ENCODE measurements at regions of chr3 and their contacts with region 1.

Region 1: DNA sequence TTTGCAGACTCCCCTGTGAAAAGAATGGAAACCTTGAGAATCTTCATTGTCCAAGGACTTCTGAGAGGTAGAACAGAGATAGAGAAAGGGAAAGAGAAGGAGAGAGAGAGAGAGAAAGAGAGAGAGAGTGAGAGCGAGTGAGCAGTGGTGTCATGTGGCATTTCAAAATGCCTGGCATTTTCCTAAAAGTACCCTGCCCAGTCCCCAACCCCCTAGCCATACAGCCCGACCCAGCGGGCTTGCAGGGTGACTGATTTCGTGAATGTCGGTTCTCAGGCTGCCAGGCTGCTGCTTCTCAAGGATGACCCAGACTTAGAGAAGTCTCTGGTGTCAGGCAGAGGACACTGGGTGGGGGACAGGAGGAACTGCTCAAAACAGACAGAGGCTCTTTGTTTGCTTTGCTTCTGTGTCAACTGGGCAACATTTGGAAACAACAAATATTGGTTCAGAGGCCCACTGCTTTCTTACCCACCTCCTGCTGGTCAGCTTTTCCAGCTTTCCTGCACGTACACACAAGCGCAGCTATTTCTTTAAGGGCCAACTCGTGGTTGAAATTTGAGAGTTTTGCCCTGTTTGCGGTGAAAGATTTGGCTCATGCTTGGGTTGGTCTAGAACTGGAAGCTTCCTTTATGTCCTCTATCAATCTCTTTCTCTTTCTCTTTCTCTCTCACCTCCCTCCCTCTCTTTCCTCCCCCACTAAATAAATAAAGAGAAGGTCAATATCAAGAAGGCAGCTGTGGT is 3.7 kb upstream of the TF start:
- DNase-seq: peak; percentile 97
- ATAC-seq: peak; percentile 78
- H3K4me3 ChIP-seq: peak overlapping the region; percentile 29 to 65 (median 48); a peak in 5 of 6 replicates
- H3K27ac ChIP-seq: peak overlapping the region; percentile 90
- H3K4me1 ChIP-seq: peaks cover 55% of the 10 kb centered on the region
- H3K27me3 ChIP-seq: peaks cover 0 to 3% of the 10 kb centered on the region in 2 experiments; a peak in 1 of 5 replicates
- CTCF ChIP-seq: peak; percentile 30
- EP300 ChIP-seq: peak; percentile 87 to 100; a peak in 3 of 4 replicates
- POLR2A ChIP-seq: no peak
- RAD21 ChIP-seq: peak; percentile 80

Region 2: DNA sequence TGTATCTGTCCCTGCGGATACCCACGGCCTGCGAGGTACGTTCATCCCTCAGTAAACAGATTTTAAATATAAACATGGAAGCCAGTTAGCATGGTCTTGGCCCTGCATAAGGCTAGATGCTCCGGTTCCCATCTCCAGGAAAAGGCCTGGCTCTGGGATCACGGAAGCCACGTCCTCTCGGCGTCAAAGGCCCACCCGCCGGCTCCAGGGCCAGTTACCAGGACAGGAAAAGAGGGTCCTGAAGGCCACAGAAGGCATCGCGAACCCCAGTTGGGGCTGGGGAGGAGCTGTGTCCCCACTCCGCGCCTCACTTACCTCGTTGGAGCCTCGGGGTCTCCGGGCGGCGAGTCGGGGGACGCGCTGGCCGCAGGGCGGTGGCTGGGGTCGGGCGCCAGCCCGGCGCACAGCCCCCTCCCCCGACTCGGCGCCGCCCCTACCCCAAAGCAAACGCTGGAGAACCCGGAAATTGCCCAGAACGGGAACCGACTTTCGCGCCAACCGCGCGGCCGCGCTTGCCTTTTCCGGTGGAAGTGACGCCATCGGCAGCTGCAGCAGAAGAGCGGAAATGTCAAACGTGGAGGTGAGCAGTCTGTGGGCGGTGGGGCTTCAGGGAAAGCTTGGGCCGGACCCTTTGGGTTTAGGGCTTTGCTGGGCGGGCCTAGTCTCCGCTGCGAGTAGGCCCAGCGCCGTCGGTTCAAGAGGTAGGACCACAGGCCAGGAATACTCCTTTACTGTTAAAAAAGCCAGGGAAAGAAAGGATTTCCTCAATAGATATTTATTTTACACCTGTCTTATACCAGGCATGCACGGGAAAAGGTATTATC is 80.9 kb before region 1 on chr3 and contains the start of gene TOPBP1:
- CTCF ChIA-PET with region 1: interaction called, 6 read pairs
- POLR2A ChIA-PET with region 1: interaction called, 18 read pairs
- in situ Hi-C with region 1: loop called (anchors 5 kb)
- intact Hi-C with region 1: loop called (anchors 1 kb)
- DNase-seq: peak; percentile 77
- ATAC-seq: peak; percentile 91
- H3K4me3 ChIP-seq: peak within 1 kb of the TSS; percentile 80 to 91 (median 88)
- H3K27ac ChIP-seq: peak within 1 kb of the TSS; percentile 70
- H3K4me1 ChIP-seq: peaks cover 58% of the 10 kb centered on the region
- H3K27me3 ChIP-seq: no peaks in the 10 kb centered on the region; a peak in 1 of 5 replicates
- CTCF ChIP-seq: no peak
- EP300 ChIP-seq: no peak
- POLR2A ChIP-seq: peak; percentile 44 to 48; a peak in 3 of 4 replicates
- RAD21 ChIP-seq: no peak
- total RNA-seq, gene TOPBP1: 42.9 and 59.3 TPM in 2 replicates

Region 3: GRCh38 chr3:133675631-133676335 is 66.7 kb before region 1 on chr3:
- CTCF ChIA-PET with region 1: no interaction called
- POLR2A ChIA-PET with region 1: interaction called, 91 read pairs
- in situ Hi-C with region 1: no loop called
- intact Hi-C with region 1: loop called (anchors 1 kb)
- DNase-seq: peak; percentile 94
- ATAC-seq: peak; percentile 77
- H3K4me3 ChIP-seq: peak overlapping the region; percentile 18 to 56 (median 37); a peak in 4 of 6 replicates
- H3K27ac ChIP-seq: peak overlapping the region; percentile 75
- H3K4me1 ChIP-seq: peaks cover 59% of the 10 kb centered on the region
- H3K27me3 ChIP-seq: no peaks in the 10 kb centered on the region
- CTCF ChIP-seq: no peak
- EP300 ChIP-seq: peak; percentile 33 to 95; a peak in 3 of 4 replicates
- POLR2A ChIP-seq: no peak
- RAD21 ChIP-seq: no peak

Region 4: DNA sequence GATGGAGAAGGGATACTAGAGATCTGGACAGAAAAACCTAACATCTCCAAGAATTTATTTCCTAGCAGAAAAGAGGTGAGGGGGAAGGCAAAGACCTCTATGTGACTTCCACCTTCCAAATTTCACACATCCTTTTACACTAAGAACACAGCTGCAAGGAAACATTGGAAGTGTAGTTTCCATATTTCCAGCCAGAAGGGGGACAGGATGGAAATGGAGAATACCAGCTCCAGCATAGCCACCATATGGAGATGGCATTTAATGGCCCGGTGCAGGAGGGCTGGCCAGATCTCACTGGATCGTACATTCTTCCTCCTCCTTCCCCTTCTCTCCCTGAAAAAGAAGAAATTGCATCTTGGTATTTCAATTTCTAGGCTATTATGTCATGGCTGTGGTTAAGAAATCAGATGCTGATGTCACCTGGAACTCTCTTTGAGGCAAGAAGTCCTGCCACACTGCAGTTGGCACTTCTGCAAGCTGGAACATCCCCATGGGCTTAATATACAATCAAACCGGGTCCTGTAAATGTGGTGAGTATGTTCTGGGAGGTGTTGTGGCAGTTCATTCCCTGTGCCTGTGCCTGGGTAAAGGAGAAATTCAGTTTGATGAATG is 33.3 kb before region 1 on chr3:
- CTCF ChIA-PET with region 1: interaction called, 3 read pairs
- POLR2A ChIA-PET with region 1: interaction called, 18 read pairs
- in situ Hi-C with region 1: no loop called
- intact Hi-C with region 1: loop called (anchors 2 kb)
- DNase-seq: no peak
- ATAC-seq: peak; percentile 73
- H3K4me3 ChIP-seq: no peak overlapping the region
- H3K27ac ChIP-seq: no peak overlapping the region
- H3K4me1 ChIP-seq: peaks cover 37% of the 10 kb centered on the region
- H3K27me3 ChIP-seq: peaks cover 1 to 3% of the 10 kb centered on the region in 2 experiments; a peak in 1 of 5 replicates
- CTCF ChIP-seq: no peak
- EP300 ChIP-seq: no peak
- POLR2A ChIP-seq: no peak
- RAD21 ChIP-seq: 0 out of 2 replicates have a peak, but pooled peaks have one; percentile 36

Region 5: GRCh38 chr3:133805527-133806475 is 63.3 kb after region 1 on chr3 and contains the start of gene SRPRB:
- CTCF ChIA-PET with region 1: no interaction called
- POLR2A ChIA-PET with region 1: interaction called, 4 read pairs
- in situ Hi-C with region 1: no loop called
- intact Hi-C with region 1: loop called (anchors 5 kb)
- DNase-seq: peak; percentile 87
- ATAC-seq: peak; percentile 99
- H3K4me3 ChIP-seq: peak within 1 kb of the TSS; percentile 77 to 91 (median 85)
- H3K27ac ChIP-seq: peak within 1 kb of the TSS; percentile 55
- H3K4me1 ChIP-seq: peaks cover 27% of the 10 kb centered on the region
- H3K27me3 ChIP-seq: no peaks in the 10 kb centered on the region; a peak in 1 of 5 replicates
- CTCF ChIP-seq: no peak
- EP300 ChIP-seq: no peak
- POLR2A ChIP-seq: peak; percentile 93 to 94
- RAD21 ChIP-seq: 0 out of 2 replicates have a peak, but pooled peaks have one; percentile 18
- total RNA-seq, gene SRPRB: 60.7 and 111 TPM in 2 replicates

Region 6: DNA sequence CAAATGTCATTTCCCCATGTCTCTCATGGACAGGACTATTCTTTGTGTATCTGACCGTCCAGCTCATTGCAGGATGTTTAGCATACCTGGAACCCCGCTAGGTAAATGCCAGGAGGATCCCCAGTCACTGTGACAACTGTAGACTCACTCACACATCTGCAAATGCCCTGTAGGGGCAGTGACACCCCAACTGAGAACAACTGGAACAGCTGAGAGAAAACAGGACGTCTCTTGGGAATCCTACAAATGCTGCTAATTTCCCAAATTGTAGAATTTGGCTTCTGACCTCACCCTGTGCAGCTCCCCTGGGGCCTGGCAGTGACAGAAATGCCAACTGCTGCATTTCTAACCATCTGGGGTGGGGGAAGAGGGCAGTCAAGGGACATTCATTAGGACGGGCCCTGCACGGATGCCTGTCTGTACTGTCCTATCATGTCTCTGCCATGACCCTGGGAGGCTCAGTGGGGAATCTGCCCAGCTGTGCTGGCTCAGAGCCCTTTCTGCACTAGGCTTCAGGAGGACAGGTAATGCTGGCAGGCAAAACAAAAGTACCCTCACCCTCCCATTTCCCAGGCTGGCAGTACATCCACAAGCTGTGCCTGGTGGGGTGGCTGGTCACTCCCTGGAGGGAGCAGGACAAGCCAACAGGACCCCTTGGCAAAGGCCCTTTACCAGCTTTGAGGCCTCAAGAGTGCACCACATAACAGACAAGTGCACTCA is 122.8 kb after region 1 on chr3:
- CTCF ChIA-PET with region 1: no interaction called
- POLR2A ChIA-PET with region 1: no interaction called
- in situ Hi-C with region 1: no loop called
- intact Hi-C with region 1: no loop called
- DNase-seq: peak; percentile 4
- ATAC-seq: peak; percentile 77
- H3K4me3 ChIP-seq: no peak overlapping the region
- H3K27ac ChIP-seq: no peak overlapping the region
- H3K4me1 ChIP-seq: no peaks in the 10 kb centered on the region
- H3K27me3 ChIP-seq: peaks cover 4 to 50% of the 10 kb centered on the region in 2 experiments; a peak in 4 of 5 replicates
- CTCF ChIP-seq: no peak
- EP300 ChIP-seq: no peak
- POLR2A ChIP-seq: no peak
- RAD21 ChIP-seq: no peak

Measured in HepG2 (cell line).